K562 (cell line): ENCODE measurements at regions of chr16 and their contacts with region 1.

Region 1: GRCh38 chr16:85305996-85306792 is 193.9 kb upstream of the CIBAR2 start:
- DNase-seq: peak; percentile 76 to 95 (median 82)
- ATAC-seq: peak; percentile 83
- H3K4me3 ChIP-seq: no peak overlapping the region
- H3K27ac ChIP-seq: peak overlapping the region; percentile 87
- H3K4me1 ChIP-seq: peaks cover 70 to 94% of the 10 kb centered on the region in 2 experiments
- H3K27me3 ChIP-seq: no peaks in the 10 kb centered on the region
- CTCF ChIP-seq: no peak
- EP300 ChIP-seq: peak; percentile 58
- POLR2A ChIP-seq: peak; percentile 57; the same call in 1 of the 2 replicates
- RAD21 ChIP-seq: no peak; a peak in 1 of 4 replicates

Region 2: GRCh38 chr16:85321509-85322271 is 15.5 kb after region 1 on chr16:
- CTCF ChIA-PET with region 1: no interaction called
- POLR2A ChIA-PET with region 1: interaction called, 60 read pairs
- in situ Hi-C with region 1: no loop called
- intact Hi-C with region 1: no loop called
- DNase-seq: peak; percentile 45 to 68 (median 56)
- ATAC-seq: peak; percentile 78
- H3K4me3 ChIP-seq: no peak overlapping the region
- H3K27ac ChIP-seq: peak overlapping the region; percentile 75
- H3K4me1 ChIP-seq: peaks cover 39 to 57% of the 10 kb centered on the region in 2 experiments
- H3K27me3 ChIP-seq: no peaks in the 10 kb centered on the region
- CTCF ChIP-seq: 0 out of 6 replicates have a peak, but pooled peaks of 1 of the 3 experiments have one; percentile 1
- EP300 ChIP-seq: no peak
- POLR2A ChIP-seq: no peak
- RAD21 ChIP-seq: no peak

Region 3: DNA sequence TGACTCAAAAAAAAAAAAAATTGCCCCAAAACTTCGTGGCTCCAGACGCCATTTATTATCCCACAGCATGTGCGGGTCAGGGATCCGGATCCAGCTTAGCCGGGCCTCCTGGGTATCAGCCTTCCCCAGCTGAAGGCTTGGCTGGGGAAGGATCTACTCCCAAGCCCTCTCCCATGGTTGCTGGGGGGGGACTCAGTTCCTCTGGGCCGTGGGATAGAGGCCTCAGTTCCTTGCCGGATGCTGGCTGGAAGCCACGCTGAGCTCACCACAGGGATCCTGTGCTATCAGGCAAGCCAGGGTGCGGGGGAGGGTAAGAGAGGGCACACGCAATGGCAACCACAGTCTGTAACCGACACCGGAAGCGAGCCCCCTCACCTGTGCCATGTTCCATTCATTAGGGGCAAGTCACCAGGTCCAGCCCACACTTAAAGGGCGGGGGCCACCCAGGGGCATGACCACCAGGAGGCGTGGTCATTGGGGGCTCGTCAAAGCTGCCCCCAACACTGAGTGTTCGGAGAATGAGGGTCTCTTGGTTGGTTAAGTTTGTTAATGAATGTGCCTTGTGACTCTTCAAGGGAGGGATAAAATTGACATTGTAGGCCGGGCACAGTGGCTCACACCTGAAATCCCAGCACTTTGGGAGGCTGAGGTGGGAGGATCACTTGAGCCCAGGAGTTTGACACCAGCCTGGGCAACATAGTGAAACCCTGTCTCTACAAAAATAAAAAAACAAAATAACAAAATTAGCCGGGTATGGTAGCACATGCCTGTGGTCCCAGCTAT is 96.9 kb after region 1 on chr16:
- CTCF ChIA-PET with region 1: no interaction called
- POLR2A ChIA-PET with region 1: no interaction called
- in situ Hi-C with region 1: no loop called
- intact Hi-C with region 1: no loop called
- DNase-seq: peak; percentile 91 to 96 (median 95)
- ATAC-seq: peak; percentile 94
- H3K4me3 ChIP-seq: no peak overlapping the region
- H3K27ac ChIP-seq: peak overlapping the region; percentile 88
- H3K4me1 ChIP-seq: peaks cover 22 to 43% of the 10 kb centered on the region in 2 experiments
- H3K27me3 ChIP-seq: no peaks in the 10 kb centered on the region
- CTCF ChIP-seq: 0 out of 6 replicates have a peak, but pooled peaks of 1 of the 3 experiments have one; percentile 35
- EP300 ChIP-seq: peak; percentile 94
- POLR2A ChIP-seq: no peak
- RAD21 ChIP-seq: 0 out of 4 replicates have a peak, but pooled peaks have one; percentile 11 to 17